Activated CD4-positive, alpha-beta T cell treated with anti-CD3 and anti-CD28 coated beads for 36 hours (primary cell): ENCODE measurements at regions of chr3 and their contacts with region 1.

Region 1: DNA sequence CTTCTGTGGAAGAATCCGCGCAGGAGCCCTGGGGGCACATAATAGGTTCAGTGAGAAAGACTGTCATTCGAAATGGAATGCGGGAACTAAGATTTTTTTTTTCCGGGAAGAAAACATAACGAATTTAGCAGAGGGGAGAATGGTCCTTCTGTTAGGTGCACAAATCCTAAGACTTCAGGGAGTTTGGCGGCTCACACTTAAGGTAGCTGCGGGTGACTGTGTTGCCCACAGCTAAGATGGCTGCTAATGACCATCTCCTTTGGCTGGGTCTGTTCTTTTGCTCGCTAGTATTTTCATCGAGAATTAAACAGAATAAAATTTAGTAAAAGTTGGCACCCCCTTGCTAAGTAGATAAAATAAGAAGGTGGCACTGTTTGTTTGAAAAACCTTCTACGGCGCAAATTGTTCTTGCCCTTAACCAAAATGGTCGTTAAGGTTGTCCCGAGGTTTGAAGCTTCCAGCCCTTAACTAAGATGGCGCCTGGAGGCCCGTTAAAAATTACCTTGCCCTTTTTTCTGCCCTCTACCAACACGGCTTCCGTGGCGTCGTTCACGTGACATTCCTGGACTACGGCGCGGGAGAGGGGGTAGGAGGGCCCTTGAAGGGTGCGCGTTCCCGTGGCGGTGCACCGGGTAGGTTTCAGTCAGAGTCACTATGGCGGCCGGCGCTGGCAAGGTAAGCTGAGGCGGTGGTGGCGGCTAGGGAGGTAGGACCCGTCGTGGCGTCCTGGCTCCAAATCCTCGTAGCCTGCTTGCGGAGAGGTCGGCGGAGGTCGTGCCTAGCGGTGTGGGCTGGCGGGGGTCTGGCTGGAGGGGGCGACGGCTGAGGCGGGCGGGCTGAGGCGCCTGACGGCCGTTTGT is at the start of gene SLMAP:
- DNase-seq: peak; percentile 98
- ATAC-seq: peak; percentile 95
- H3K4me3 Mint-ChIP-seq: peak within 1 kb of the TSS; percentile 97
- H3K27ac Mint-ChIP-seq: peak within 1 kb of the TSS; percentile 97
- H3K4me1 Mint-ChIP-seq: peaks cover 43% of the 10 kb centered on the region
- H3K27me3 Mint-ChIP-seq: no peaks in the 10 kb centered on the region
- total RNA-seq, gene SLMAP: 43.1 to 55.3 TPM

Region 2: DNA sequence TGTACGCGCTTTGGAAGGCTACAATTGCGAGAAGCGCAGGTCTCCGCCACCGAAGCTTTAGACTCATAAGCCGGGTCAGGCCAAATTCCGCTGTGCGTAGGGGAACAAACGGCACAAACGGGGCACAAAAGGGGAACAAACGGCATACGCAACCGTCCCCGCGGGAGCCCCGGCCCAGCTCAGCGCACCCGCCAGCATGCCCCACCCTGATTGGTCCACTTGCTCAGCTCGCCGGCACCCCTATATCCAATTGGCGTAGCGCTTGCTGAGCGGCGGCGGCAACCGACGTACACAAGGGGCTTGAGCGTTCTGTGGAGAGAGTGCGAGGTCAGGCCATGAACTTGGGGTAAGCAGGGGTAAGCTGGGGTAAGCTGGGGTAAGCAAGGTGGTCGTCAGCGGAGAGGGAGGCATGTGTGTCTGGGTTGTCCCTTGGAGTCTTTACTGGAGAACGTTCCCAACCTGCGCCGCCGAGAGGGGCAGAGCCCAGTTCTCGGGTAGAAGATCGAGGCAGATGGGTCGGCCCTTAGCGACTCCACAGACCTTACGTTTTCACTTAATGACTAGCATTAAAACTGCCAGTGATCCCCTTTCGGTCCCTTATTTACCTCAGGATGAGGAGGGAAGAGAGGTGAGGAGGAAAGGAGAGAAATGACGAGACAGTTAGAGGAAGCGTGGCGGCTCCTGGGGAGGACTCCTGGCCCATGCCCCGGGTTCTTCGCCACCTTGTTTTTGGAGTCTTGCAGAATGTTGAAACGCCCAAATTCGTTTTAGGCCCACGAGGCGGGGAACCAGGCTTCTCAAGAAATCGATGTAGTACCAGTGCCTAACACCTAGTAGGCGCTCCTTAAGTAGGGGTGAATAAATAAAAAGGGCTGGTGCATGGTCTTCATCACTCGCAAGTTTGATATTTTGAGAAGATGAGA is 1198.7 kb before region 1 on chr3 and contains the start of gene CCDC66:
- CTCF ChIA-PET with region 1: no interaction called
- POLR2A ChIA-PET with region 1: no interaction called
- intact Hi-C with region 1: loop called in 1 of 2 experiments (anchors 10 kb)
- DNase-seq: peak; percentile 97
- ATAC-seq: peak; percentile 97
- H3K4me3 Mint-ChIP-seq: peak within 1 kb of the TSS; percentile 93
- H3K27ac Mint-ChIP-seq: peak within 1 kb of the TSS; percentile 99
- H3K4me1 Mint-ChIP-seq: peaks cover 20% of the 10 kb centered on the region
- H3K27me3 Mint-ChIP-seq: no peaks in the 10 kb centered on the region
- total RNA-seq, gene CCDC66: 23.5 to 28.5 TPM

Region 3: GRCh38 chr3:57298041-57298440 is 457.9 kb before region 1 on chr3:
- CTCF ChIA-PET with region 1: no interaction called
- POLR2A ChIA-PET with region 1: no interaction called
- intact Hi-C with region 1: no loop called
- DNase-seq: peak; percentile 39
- ATAC-seq: peak; percentile 82
- H3K4me3 Mint-ChIP-seq: no peak overlapping the region
- H3K27ac Mint-ChIP-seq: no peak overlapping the region
- H3K4me1 Mint-ChIP-seq: no peaks in the 10 kb centered on the region
- H3K27me3 Mint-ChIP-seq: peaks cover 8% of the 10 kb centered on the region

Region 4: GRCh38 chr3:57555738-57556458 is 200.0 kb before region 1 on chr3 and contains the start of gene PDE12:
- CTCF ChIA-PET with region 1: no interaction called
- POLR2A ChIA-PET with region 1: no interaction called
- intact Hi-C with region 1: loop called in 1 of 2 experiments (anchors 1 kb)
- DNase-seq: peak; percentile 91
- ATAC-seq: peak; percentile 82
- H3K4me3 Mint-ChIP-seq: peak within 1 kb of the TSS; percentile 91
- H3K27ac Mint-ChIP-seq: peak within 1 kb of the TSS; percentile 100
- H3K4me1 Mint-ChIP-seq: peaks cover 29% of the 10 kb centered on the region
- H3K27me3 Mint-ChIP-seq: no peaks in the 10 kb centered on the region
- total RNA-seq, gene PDE12: 19.2 to 19.9 TPM

Region 5: DNA sequence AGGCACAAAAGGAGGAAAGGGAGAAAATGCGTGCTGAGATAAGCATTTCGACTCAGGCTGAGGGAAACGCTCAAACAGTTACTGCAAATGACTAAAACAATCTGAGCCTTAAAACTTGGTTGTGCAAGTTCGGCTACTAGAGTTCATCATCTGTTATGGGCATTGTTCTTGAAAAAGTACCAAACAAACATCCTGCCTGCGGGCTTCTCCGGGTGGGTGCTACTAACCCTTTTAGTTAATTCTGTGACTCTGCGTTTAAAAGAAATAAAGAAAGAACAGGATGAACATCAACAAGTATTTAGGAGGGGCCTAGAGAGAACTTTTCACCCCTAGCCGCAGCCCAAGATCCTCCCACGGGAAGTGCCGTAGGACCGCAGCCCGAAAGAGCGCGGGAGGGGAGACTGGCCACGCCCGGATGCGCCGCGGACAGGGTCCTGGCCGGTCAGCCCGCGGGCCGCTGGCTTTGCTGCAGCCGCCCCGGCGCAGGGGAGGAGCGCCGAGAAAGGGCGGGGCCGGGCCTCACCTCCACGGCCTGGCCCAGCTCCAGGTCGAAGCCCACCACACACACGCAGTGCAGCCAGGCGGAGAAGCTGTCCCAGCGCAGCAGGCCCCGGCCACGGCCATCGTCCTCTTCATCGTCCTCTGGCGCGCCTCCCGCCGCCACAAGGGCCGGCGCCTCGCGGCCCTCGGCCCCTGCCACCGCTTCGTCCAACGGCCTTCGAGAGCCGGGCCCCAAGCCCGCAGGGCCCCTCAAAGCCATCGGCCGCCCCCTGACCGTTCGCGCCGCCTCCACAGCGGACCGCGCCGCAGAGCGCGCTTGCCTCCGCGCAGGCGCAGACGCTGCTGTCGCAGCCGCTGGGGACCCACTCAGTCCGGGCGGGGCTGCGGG is 63.4 kb before region 1 on chr3 and contains the start of gene DENND6A:
- CTCF ChIA-PET with region 1: interaction called, 4 read pairs
- POLR2A ChIA-PET with region 1: interaction called, 5 read pairs
- intact Hi-C with region 1: loop called (anchors 1 to 2 kb)
- DNase-seq: peak; percentile 98
- ATAC-seq: peak; percentile 88
- H3K4me3 Mint-ChIP-seq: peak within 1 kb of the TSS; percentile 87
- H3K27ac Mint-ChIP-seq: peak within 1 kb of the TSS; percentile 85
- H3K4me1 Mint-ChIP-seq: peaks cover 31% of the 10 kb centered on the region
- H3K27me3 Mint-ChIP-seq: no peaks in the 10 kb centered on the region
- total RNA-seq, gene DENND6A: 15.0 to 17.1 TPM

Region 6: DNA sequence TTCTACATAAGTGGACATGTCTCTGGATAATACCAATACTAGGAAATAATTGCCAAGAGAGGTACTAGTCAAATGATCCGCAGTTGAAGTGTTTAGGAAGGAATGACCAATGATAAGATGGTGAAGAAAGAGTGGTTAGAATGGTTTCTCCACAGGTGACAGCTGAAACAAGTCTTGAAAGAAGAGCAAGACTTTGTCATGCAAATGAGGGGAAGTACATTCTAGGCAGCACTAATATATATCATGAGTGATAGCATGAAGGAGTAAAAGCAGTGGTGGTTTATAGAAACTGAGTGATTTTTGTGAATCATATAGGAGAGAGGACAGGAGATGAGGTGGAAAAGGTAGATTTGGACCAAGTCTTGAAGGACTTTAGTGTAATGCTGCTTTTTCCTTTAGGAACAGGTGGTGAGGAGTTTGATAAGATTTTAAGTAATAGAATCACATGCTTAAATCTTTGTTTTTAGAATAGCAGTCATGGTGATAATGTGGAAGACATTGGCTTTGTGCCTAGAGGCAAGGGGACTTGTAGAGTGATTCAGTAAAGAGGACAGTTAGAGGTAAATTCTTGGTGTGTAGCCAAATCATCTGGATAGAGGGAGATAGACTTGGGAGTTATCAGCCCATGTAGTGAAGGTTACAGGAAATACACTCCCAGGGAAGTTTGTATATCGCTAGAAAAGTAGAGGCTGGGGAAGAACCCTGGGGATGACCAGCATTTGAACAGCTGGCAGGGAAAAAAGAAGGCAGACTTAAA is 32.1 kb after region 1 on chr3:
- CTCF ChIA-PET with region 1: no interaction called
- POLR2A ChIA-PET with region 1: interaction called, 3 read pairs
- intact Hi-C with region 1: loop called in 1 of 2 experiments (anchors 1 kb)
- DNase-seq: no peak
- ATAC-seq: peak; percentile 95
- H3K4me3 Mint-ChIP-seq: no peak overlapping the region
- H3K27ac Mint-ChIP-seq: no peak overlapping the region
- H3K4me1 Mint-ChIP-seq: peaks cover 18% of the 10 kb centered on the region
- H3K27me3 Mint-ChIP-seq: no peaks in the 10 kb centered on the region

Region 7: GRCh38 chr3:57803647-57804081 is 47.8 kb after region 1 on chr3:
- CTCF ChIA-PET with region 1: interaction called, 3 read pairs
- POLR2A ChIA-PET with region 1: no interaction called
- intact Hi-C with region 1: loop called (anchors 1 to 5 kb)
- DNase-seq: no peak
- ATAC-seq: peak; percentile 76
- H3K4me3 Mint-ChIP-seq: peak overlapping the region; percentile 36
- H3K27ac Mint-ChIP-seq: peak overlapping the region; percentile 76
- H3K4me1 Mint-ChIP-seq: peaks cover 65% of the 10 kb centered on the region
- H3K27me3 Mint-ChIP-seq: no peaks in the 10 kb centered on the region

Region 8: DNA sequence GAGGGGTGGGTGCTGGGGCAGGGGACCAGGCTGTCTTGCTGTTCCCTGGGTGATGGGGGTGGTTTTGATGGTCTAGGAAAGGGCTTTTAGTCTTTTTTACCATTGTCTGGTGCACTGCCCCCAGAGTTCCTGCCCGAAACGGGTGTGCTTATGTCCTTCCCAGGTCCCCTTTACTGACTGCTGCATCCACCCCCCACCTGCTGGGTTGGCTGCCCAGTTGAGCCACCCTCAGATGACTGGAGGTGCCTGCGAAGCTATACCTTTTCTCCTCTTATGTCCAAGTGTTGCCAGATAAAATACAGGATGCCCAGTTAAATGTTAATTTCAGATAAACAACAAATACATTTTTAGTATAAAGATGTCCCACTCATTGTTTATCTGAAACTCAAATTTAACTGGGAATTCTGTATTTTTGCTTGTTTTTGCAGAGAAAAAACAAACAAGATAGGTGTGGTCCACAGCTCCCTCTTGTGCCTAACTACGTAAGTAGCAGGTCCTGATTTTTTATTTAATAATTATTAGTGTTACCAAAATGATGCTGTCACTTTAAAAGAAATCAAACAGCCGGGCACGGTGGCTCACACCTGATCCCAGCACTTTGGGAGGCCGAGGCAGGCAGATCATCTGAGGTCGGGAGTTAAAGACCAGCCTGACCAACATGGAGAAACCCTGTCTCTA is 544.1 kb after region 1 on chr3:
- CTCF ChIA-PET with region 1: no interaction called
- POLR2A ChIA-PET with region 1: no interaction called
- intact Hi-C with region 1: no loop called
- DNase-seq: no peak
- ATAC-seq: no peak
- H3K4me3 Mint-ChIP-seq: no peak overlapping the region
- H3K27ac Mint-ChIP-seq: no peak overlapping the region
- H3K4me1 Mint-ChIP-seq: no peaks in the 10 kb centered on the region
- H3K27me3 Mint-ChIP-seq: peaks cover 14% of the 10 kb centered on the region